Activated CD8-positive, alpha-beta T cell treated with anti-CD3 and anti-CD28 coated beads for 36 hours (primary cell): ENCODE measurements at regions of chr10 and their contacts with region 1.

Region 1: GRCh38 chr10:98467506-98468346 is 21.0 kb upstream of the HPS1 start:
- DNase-seq: peak; percentile 74
- ATAC-seq: peak; percentile 97
- H3K4me3 Mint-ChIP-seq: peak overlapping the region; percentile 79
- H3K27ac Mint-ChIP-seq: peak overlapping the region; percentile 82
- H3K4me1 Mint-ChIP-seq: peaks cover 9% of the 10 kb centered on the region
- H3K27me3 Mint-ChIP-seq: peaks cover 9% of the 10 kb centered on the region
- CTCF ChIP-seq: peak; percentile 81

Region 2: DNA sequence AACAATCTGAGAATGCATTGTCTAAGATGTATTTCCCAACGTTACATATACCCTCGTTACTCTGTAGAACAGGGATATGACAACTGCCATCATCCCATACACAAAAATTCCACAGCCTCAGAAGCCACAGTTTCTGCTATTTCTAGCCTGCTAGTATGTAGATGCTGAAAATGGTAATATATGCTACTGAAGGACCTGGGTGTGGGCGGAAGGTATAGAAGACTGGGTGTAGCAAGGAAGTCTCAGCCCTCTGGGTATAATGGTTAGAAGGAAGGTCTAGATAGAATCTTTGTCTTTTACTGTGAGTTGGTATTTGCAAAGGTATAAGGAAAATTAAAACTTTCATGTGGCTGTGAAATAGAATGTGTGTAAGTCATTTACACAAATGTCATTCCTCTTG is 58.2 kb after region 1 on chr10:
- CTCF ChIA-PET with region 1: no interaction called
- POLR2A ChIA-PET with region 1: no interaction called
- intact Hi-C with region 1: no loop called
- DNase-seq: no peak
- ATAC-seq: no peak
- H3K4me3 Mint-ChIP-seq: no peak overlapping the region
- H3K27ac Mint-ChIP-seq: no peak overlapping the region
- H3K4me1 Mint-ChIP-seq: no peaks in the 10 kb centered on the region
- H3K27me3 Mint-ChIP-seq: peaks cover 6% of the 10 kb centered on the region
- CTCF ChIP-seq: no peak

Region 3: GRCh38 chr10:98664331-98665042 is 196.8 kb after region 1 on chr10:
- CTCF ChIA-PET with region 1: interaction called, 15 read pairs
- POLR2A ChIA-PET with region 1: no interaction called
- intact Hi-C with region 1: loop called (anchors 2 kb)
- DNase-seq: peak; percentile 38
- ATAC-seq: peak; percentile 87
- H3K4me3 Mint-ChIP-seq: no peak overlapping the region
- H3K27ac Mint-ChIP-seq: no peak overlapping the region
- H3K4me1 Mint-ChIP-seq: no peaks in the 10 kb centered on the region
- H3K27me3 Mint-ChIP-seq: peaks cover 16% of the 10 kb centered on the region
- CTCF ChIP-seq: peak; percentile 67

Region 4: DNA sequence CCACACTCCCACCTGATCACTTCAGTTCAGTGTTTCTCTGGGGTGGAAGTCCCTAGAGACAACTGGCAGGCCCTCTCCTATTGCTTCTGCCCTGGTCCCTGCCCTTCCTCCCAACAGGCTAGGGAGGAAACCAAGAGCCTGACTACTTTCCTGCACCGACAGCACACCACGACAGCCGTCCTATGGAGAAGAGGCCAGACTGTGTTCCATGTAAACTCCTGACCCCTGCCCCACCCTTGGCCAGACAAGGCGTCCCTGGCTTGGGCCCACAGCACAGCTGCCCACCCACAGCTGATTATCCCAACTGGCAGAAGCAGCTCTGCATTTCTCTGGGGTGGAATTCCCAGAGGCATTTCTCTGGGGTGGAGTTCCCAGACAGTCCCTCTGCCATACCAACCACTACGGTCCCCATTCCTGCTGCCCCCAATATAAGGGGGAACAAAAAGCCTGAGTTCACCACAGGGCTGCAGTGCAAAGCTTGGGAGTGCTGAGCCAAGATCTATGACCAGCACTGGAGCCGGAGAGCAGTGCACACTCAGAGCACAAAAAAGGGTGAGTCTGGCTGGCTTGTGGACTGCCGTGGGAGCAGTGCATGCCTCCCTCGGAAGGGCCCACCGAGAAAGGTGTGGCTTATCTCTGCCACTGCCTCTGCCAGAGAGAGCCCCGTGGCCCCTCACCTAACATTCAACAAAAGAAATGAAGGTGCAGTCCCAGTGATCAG is 574.5 kb after region 1 on chr10:
- CTCF ChIA-PET with region 1: interaction called, 4 read pairs
- POLR2A ChIA-PET with region 1: interaction called, 3 read pairs
- intact Hi-C with region 1: loop called (anchors 5 kb)
- DNase-seq: no peak
- ATAC-seq: no peak
- H3K4me3 Mint-ChIP-seq: no peak overlapping the region
- H3K27ac Mint-ChIP-seq: no peak overlapping the region
- H3K4me1 Mint-ChIP-seq: no peaks in the 10 kb centered on the region
- H3K27me3 Mint-ChIP-seq: no peaks in the 10 kb centered on the region
- CTCF ChIP-seq: no peak

Region 5: GRCh38 chr10:99248824-99249223 is 781.1 kb after region 1 on chr10:
- CTCF ChIA-PET with region 1: interaction called, 21 read pairs
- POLR2A ChIA-PET with region 1: interaction called, 4 read pairs
- intact Hi-C with region 1: loop called (anchors 1 kb)
- DNase-seq: no peak
- ATAC-seq: no peak
- H3K4me3 Mint-ChIP-seq: no peak overlapping the region
- H3K27ac Mint-ChIP-seq: no peak overlapping the region
- H3K4me1 Mint-ChIP-seq: no peaks in the 10 kb centered on the region
- H3K27me3 Mint-ChIP-seq: peaks cover 18% of the 10 kb centered on the region
- CTCF ChIP-seq: no peak

Region 6: GRCh38 chr10:99276848-99277486 is 809.2 kb after region 1 on chr10:
- CTCF ChIA-PET with region 1: interaction called, 12 read pairs
- POLR2A ChIA-PET with region 1: no interaction called
- intact Hi-C with region 1: no loop called
- DNase-seq: no peak
- ATAC-seq: no peak
- H3K4me3 Mint-ChIP-seq: no peak overlapping the region
- H3K27ac Mint-ChIP-seq: no peak overlapping the region
- H3K4me1 Mint-ChIP-seq: no peaks in the 10 kb centered on the region
- H3K27me3 Mint-ChIP-seq: peaks cover 7% of the 10 kb centered on the region
- CTCF ChIP-seq: peak; percentile 62